Naive thymus-derived CD8-positive, alpha-beta T cell (primary cell): ENCODE measurements at regions of chr17 and their contacts with region 1.

Region 1: DNA sequence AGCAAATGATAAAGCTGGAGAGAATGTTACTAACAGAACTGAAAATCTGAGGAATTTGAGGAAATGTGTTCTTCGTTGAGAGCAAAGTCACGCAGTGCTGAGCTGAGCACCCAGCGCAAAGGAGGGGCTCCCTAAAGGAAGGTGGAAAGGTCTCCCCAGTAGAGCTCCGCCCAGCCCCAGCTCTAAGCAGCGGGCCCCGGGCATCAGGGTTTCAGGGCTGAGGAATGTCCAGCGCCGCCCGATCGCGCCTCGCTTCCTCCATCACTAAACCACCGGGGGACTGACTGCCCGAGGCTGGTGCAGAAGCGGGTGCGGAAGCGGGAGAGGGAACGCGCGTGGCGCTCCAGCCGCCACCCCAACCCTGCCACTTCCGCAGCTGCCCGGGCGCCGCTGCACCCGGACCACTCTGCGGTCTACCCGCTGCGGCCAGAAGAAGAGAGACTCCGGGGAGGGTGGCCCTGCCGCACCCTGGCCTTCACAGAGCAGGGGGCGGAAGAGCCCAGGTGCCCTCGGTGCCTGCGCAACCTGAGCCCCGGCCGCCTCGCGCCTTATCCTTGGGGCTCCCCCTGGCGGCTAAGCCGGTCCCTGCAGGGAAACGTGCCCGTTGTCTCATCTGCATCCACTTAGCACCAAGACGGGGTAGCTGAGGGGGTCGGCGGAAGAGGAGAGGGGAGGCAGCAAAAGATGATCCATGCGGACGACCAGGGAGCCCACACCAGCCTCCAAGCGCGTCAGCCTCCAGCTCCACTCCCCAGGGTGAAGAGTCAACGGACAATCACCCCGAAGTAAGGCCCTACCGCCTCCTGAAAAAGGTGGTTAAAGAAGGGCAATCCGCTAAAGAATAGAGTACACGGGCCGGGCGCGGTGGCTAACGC is 12.4 kb upstream of the GUCY2D start:
- DNase-seq: peak; percentile 79 to 98 (median 92)
- ATAC-seq: peak; percentile 89 to 90
- H3K4me3 Mint-ChIP-seq: peak overlapping the region; percentile 74 to 92 (median 84)
- H3K27ac Mint-ChIP-seq: peak overlapping the region; percentile 76 to 97 (median 92)
- H3K4me1 Mint-ChIP-seq: peaks cover 6 to 27% (median 25%) of the 10 kb centered on the region in 4 donors
- H3K27me3 Mint-ChIP-seq: peaks cover 0 to 2% (median 0%) of the 10 kb centered on the region in 5 donors

Region 2: GRCh38 chr17:7834962-7835813 is 154.8 kb before region 1 on chr17:
- POLR2A ChIA-PET with region 1: interaction called, 12 read pairs
- DNase-seq: peak; percentile 77 to 97 (median 95)
- ATAC-seq: peak; percentile 54 to 64
- H3K4me3 Mint-ChIP-seq: peak overlapping the region; percentile 96 to 99 (median 98)
- H3K27ac Mint-ChIP-seq: peak overlapping the region; percentile 95 to 100 (median 100)
- H3K4me1 Mint-ChIP-seq: peaks cover 44 to 55% (median 47%) of the 10 kb centered on the region in 4 donors
- H3K27me3 Mint-ChIP-seq: peaks cover 0 to 2% (median 0%) of the 10 kb centered on the region in 5 donors

Region 3: GRCh38 chr17:7862692-7863437 is 127.2 kb before region 1 on chr17:
- POLR2A ChIA-PET with region 1: interaction called, 20 read pairs
- DNase-seq: peak in 9 of 10 donors; percentile 42 to 84 (median 64)
- ATAC-seq: no peak
- H3K4me3 Mint-ChIP-seq: no peak overlapping the region
- H3K27ac Mint-ChIP-seq: peak overlapping the region in 4 of 10 donors; percentile 2 to 65 (median 2)
- H3K4me1 Mint-ChIP-seq: peaks cover 23 to 39% (median 25%) of the 10 kb centered on the region in 4 donors
- H3K27me3 Mint-ChIP-seq: no peaks in the 10 kb centered on the region

Region 4: GRCh38 chr17:7915611-7916382 is 74.2 kb before region 1 on chr17 and contains the start of gene RNF227:
- POLR2A ChIA-PET with region 1: interaction called, 50 read pairs
- DNase-seq: peak; percentile 61 to 91 (median 80)
- ATAC-seq: peak; percentile 79 to 83
- H3K4me3 Mint-ChIP-seq: peak within 1 kb of the TSS; percentile 86 to 93 (median 90)
- H3K27ac Mint-ChIP-seq: peak within 1 kb of the TSS; percentile 86 to 96 (median 94)
- H3K4me1 Mint-ChIP-seq: peaks cover 26 to 42% (median 32%) of the 10 kb centered on the region in 4 donors
- H3K27me3 Mint-ChIP-seq: no peaks in the 10 kb centered on the region
- polyA plus RNA-seq, gene RNF227: 0.65 to 4.8 (median 2.4) TPM

Region 5: GRCh38 chr17:7931709-7932482 is 58.1 kb before region 1 on chr17 and contains the starts of genes CNTROB and TRAPPC1:
- POLR2A ChIA-PET with region 1: interaction called, 12 read pairs
- DNase-seq: peak; percentile 97 to 100 (median 99)
- ATAC-seq: peak; percentile 96 to 97
- H3K4me3 Mint-ChIP-seq: peak within 1 kb of the TSS; percentile 87 to 100 (median 98)
- H3K27ac Mint-ChIP-seq: peak within 1 kb of the TSS; percentile 91 to 99 (median 97)
- H3K4me1 Mint-ChIP-seq: peaks cover 28 to 56% (median 51%) of the 10 kb centered on the region in 4 donors
- H3K27me3 Mint-ChIP-seq: no peaks in the 10 kb centered on the region
- polyA plus RNA-seq, gene CNTROB: 7.6 to 18.5 (median 12.4) TPM
- polyA plus RNA-seq, gene TRAPPC1: 199 to 219 (median 205) TPM

Region 6: DNA sequence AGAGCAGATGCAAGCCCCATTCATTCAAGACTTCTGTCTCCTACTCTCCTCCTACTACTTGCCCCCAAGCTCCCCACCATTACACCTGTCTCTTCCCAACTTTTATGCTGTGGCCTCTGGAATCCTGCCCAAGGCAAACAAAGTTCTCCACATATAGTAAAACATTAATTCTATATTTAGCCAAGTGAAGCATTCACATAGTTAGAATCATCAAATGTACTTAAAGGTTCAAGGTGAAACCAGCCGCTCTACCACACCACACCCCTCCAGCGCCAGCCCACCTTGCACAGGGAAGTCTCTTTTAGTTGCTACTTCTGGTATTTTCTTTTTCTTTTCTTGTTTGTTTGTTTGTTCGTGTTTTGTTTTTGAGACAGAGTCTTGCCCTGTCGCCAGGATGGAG is 13.0 kb before region 1 on chr17:
- POLR2A ChIA-PET with region 1: no interaction called
- DNase-seq: no peak
- ATAC-seq: no peak
- H3K4me3 Mint-ChIP-seq: no peak overlapping the region
- H3K27ac Mint-ChIP-seq: no peak overlapping the region
- H3K4me1 Mint-ChIP-seq: no peaks in the 10 kb centered on the region
- H3K27me3 Mint-ChIP-seq: peaks cover 0 to 10% (median 3%) of the 10 kb centered on the region in 5 donors